PC-3 (cell line): ENCODE measurements at regions of chr4 and their contacts with region 1.

Region 1: DNA sequence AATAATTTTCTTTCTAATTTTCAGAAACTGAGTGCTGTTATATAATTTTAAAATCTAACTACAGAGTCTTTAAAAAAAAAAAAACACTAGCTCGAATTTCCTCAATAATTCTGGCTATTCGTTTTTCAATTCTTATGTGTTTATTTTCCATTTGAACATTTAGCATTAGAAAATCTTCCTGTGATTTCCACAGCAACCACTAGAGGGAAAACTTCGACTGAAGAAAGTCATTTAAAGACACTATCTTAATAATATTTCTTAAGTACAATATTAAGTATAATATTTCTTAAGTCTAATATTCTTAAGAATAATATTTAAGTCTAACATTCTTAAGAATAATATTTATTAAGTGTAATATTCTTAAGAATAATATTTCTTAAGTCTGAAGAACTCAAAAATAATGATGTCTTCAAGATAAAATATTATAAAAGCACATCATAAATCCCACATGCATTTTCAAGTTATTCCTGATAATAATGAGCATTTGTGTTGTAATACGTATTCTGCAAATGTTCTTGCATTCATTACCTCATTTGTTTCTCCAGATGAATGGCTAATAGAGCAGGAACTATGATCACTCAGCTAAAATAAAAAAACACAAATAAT is 118.4 kb upstream of the WDR17 start:
- DNase-seq: peak; percentile 58
- ATAC-seq: no peak
- H3K4me3 ChIP-seq: no peak overlapping the region
- H3K27ac ChIP-seq: no peak overlapping the region
- H3K4me1 ChIP-seq: no peaks in the 10 kb centered on the region; the same call in 1 of the 2 replicates
- H3K27me3 ChIP-seq: no peaks in the 10 kb centered on the region
- CTCF ChIP-seq: peak; percentile 46

Region 2: GRCh38 chr4:175560604-175561003 is 386.6 kb before region 1 on chr4:
- CTCF ChIA-PET with region 1: no interaction called
- POLR2A ChIA-PET with region 1: no interaction called
- intact Hi-C with region 1: loop called (anchors 5 kb)
- DNase-seq: peak; percentile 68
- ATAC-seq: peak; percentile 68
- H3K4me3 ChIP-seq: no peak overlapping the region
- H3K27ac ChIP-seq: no peak overlapping the region
- H3K4me1 ChIP-seq: 0 out of 2 replicates have a peak, but pooled peaks cover 5% of the 10 kb centered on the region
- H3K27me3 ChIP-seq: no peaks in the 10 kb centered on the region
- CTCF ChIP-seq: peak; percentile 67